Sciatic nerve (tissue), 2 donors: ENCODE measurements at regions of chr3 and their contacts with region 1.

Region 1: GRCh38 chr3:65039754-65040210 is 352.0 kb upstream of the ADAMTS9 start:
- DNase-seq: no peak
- ATAC-seq: no peak

Region 2: DNA sequence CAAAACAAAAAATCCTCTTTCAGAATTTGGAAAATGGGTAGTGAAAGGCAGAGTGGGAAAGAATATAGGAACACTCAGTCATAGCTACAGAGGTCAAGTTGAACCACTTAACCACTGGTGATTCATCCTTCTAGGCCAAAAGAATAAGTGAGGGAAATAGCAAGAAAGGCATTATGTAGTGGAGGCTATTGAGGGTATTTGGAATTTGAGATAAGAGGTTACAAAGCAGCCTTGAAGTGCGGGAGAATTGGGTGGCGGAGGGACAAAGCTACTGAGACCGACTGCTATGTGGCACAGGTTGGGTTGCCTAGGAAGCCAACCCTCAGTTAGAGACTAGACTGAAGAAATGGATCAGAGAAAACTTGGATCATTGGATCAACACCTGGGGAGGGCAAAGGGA is 1652.2 kb before region 1 on chr3:
- intact Hi-C with region 1: loop called (anchors 5 kb)
- DNase-seq: no peak
- ATAC-seq: no peak

Region 3: GRCh38 chr3:66098436-66098835 is 1058.7 kb after region 1 on chr3:
- intact Hi-C with region 1: loop called (anchors 10 kb)
- DNase-seq: no peak
- ATAC-seq: no peak